Vagina (tissue), 2 donors: ENCODE measurements at regions of chr11 and their contacts with region 1.

Region 1: GRCh38 chr11:72471005-72471898 is 36.9 kb upstream of the CLPB start:
- DNase-seq: no peak
- H3K4me3 ChIP-seq: no peak overlapping the region
- H3K27ac ChIP-seq: no peak overlapping the region
- H3K4me1 ChIP-seq: no peaks in the 10 kb centered on the region
- H3K27me3 ChIP-seq: no peaks in the 10 kb centered on the region
- CTCF ChIP-seq: peak; percentile 73 to 86 (median 79)
- POLR2A ChIP-seq: no peak

Region 2: DNA sequence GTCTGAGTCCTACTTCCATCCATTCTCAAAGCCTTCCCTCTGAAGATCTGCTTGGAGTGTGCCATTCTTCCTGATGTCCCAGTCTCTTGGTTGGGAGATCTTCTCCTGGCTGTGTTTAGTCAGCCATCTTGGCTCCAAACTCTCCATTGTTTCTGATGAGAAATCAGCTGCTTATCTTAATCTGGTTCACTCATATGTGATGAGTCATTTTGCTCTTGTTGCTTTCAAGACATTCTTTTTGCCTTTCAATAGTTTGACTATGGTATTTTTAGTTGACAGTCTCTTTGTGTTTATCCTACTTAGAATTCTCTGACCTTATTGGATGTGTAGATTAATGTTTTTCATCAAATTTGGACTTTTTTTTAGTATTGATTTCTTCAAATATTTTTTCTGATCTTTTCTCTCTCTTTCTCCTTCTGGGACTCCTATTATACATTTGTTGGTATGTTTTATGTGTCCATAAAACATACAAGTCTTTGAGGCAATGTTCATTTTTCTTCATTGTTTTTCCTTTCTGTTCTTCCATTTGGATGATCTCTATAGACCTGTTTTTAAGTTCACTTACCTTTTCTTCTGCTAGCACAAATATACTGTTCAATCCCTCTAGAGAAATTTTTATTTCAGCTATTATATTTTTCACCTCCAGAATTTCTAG is 40.3 kb after region 1 on chr11:
- intact Hi-C with region 1: no loop called
- DNase-seq: no peak
- H3K4me3 ChIP-seq: no peak overlapping the region
- H3K27ac ChIP-seq: no peak overlapping the region
- H3K4me1 ChIP-seq: no peaks in the 10 kb centered on the region
- H3K27me3 ChIP-seq: no peaks in the 10 kb centered on the region
- CTCF ChIP-seq: no peak
- POLR2A ChIP-seq: no peak

Region 3: GRCh38 chr11:72561856-72562255 is 90.6 kb after region 1 on chr11:
- intact Hi-C with region 1: no loop called
- DNase-seq: peak in 1 of 2 donors; percentile 91
- H3K4me3 ChIP-seq: no peak overlapping the region
- H3K27ac ChIP-seq: no peak overlapping the region
- H3K4me1 ChIP-seq: no peaks in the 10 kb centered on the region
- H3K27me3 ChIP-seq: no peaks in the 10 kb centered on the region
- CTCF ChIP-seq: no peak
- POLR2A ChIP-seq: no peak

Region 4: GRCh38 chr11:72573072-72573854 is 102.0 kb after region 1 on chr11:
- intact Hi-C with region 1: loop called (anchors 10 kb)
- DNase-seq: no peak
- H3K4me3 ChIP-seq: no peak overlapping the region
- H3K27ac ChIP-seq: no peak overlapping the region
- H3K4me1 ChIP-seq: no peaks in the 10 kb centered on the region
- H3K27me3 ChIP-seq: no peaks in the 10 kb centered on the region
- CTCF ChIP-seq: peak in 2 of 3 experiments; percentile 19 to 33
- POLR2A ChIP-seq: no peak

Region 5: DNA sequence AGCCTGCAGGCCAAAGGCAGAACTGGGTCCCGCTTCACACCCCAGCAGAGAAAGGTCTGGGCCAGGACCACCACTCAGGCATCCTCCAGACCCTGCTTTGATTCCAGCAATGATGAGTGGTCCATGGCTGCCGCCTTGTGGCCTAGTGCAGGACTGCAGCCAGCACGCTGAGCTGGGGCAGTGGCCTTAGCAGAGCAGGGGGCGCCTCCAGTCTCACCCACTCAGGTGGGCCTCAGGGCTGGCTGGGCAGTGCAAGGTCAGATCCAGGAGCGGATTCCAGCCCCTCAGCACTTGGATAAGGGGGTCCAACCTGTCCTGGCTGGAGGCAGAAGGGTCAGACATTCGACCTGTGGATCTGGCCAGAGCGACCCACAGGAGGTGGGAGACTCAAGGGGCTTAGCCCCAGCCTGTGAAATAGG is 212.5 kb after region 1 on chr11:
- intact Hi-C with region 1: loop called (anchors 10 kb)
- DNase-seq: no peak
- H3K4me3 ChIP-seq: no peak overlapping the region
- H3K27ac ChIP-seq: peak overlapping the region; percentile 73
- H3K4me1 ChIP-seq: peaks cover 51% of the 10 kb centered on the region
- H3K27me3 ChIP-seq: no peaks in the 10 kb centered on the region
- CTCF ChIP-seq: peak; percentile 79 to 89 (median 88)
- POLR2A ChIP-seq: no peak

Region 6: GRCh38 chr11:73597956-73598718 is 1126.9 kb after region 1 on chr11 and contains the start of gene FAM168A:
- intact Hi-C with region 1: loop called (anchors 10 kb)
- DNase-seq: peak in 1 of 2 donors; percentile 95
- H3K4me3 ChIP-seq: peak within 1 kb of the TSS; percentile 82 to 97
- H3K27ac ChIP-seq: peak within 1 kb of the TSS; percentile 86
- H3K4me1 ChIP-seq: peaks cover 37% of the 10 kb centered on the region
- H3K27me3 ChIP-seq: no peaks in the 10 kb centered on the region
- CTCF ChIP-seq: no peak
- POLR2A ChIP-seq: peak in 1 of 2 donors; percentile 54
- total RNA-seq, gene FAM168A: 21.4 TPM